OCI-LY7 (cell line): ENCODE measurements at regions of chr12 and their contacts with region 1.

Region 1: DNA sequence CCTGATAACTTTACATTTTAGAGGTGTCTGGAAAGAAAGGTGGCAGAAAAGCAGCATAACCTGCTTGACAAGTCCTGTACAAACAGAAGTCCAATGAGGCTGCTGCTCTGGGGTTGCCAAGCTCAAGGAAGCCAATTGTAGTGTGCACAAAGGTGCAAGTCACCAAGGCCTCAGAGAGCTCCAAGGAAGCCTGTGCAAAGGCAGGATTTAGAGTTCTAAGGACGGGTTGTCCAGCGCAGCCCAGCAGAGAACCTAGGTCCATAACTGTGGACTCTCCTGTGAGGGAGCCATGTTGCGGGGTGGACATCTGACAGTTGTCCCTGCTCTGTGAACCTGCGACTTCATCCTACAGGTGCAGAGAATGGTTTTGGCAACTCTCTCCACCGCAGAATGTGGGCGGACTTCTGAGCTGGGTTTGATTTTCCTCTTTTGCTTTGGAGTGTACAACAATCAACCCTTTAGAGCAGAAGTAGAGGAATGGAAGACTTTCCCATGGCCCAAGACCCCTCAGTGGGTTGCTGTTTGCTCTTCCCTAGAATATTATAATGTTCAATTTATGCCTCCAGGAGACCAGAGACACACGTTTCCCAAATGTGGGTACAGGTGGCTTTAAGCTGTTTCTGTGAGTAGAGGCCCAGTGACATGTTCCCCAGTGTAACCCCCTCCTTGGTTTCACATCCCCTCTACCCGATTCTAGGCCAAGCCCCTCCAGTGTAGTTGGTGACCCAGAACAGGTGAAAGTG is 81.0 kb downstream of the ETV6 start:
- DNase-seq: peak; percentile 93
- H3K4me3 ChIP-seq: peak overlapping the region; percentile 62
- H3K27ac ChIP-seq: peak overlapping the region; percentile 91
- H3K4me1 ChIP-seq: peaks cover 99% of the 10 kb centered on the region
- CTCF ChIP-seq: no peak

Region 2: GRCh38 chr12:11508699-11509098 is 221.8 kb before region 1 on chr12:
- CTCF ChIA-PET with region 1: no interaction called
- POLR2A ChIA-PET with region 1: no interaction called
- intact Hi-C with region 1: no loop called
- DNase-seq: no peak
- H3K4me3 ChIP-seq: no peak overlapping the region
- H3K27ac ChIP-seq: no peak overlapping the region
- H3K4me1 ChIP-seq: no peaks in the 10 kb centered on the region
- CTCF ChIP-seq: no peak

Region 3: GRCh38 chr12:11746024-11746771 is 15.7 kb after region 1 on chr12:
- CTCF ChIA-PET with region 1: interaction called, 16 read pairs
- POLR2A ChIA-PET with region 1: interaction called, 201 read pairs
- intact Hi-C with region 1: loop called (anchors 1 kb)
- DNase-seq: peak; percentile 51
- H3K4me3 ChIP-seq: no peak overlapping the region
- H3K27ac ChIP-seq: peak overlapping the region; percentile 100
- H3K4me1 ChIP-seq: peaks cover 100% of the 10 kb centered on the region
- CTCF ChIP-seq: no peak

Region 4: GRCh38 chr12:11758510-11759493 is 28.3 kb after region 1 on chr12:
- CTCF ChIA-PET with region 1: interaction called, 6 read pairs
- POLR2A ChIA-PET with region 1: interaction called, 201 read pairs
- intact Hi-C with region 1: no loop called
- DNase-seq: peak; percentile 82
- H3K4me3 ChIP-seq: peak overlapping the region; percentile 49
- H3K27ac ChIP-seq: peak overlapping the region; percentile 100
- H3K4me1 ChIP-seq: peaks cover 100% of the 10 kb centered on the region
- CTCF ChIP-seq: no peak

Region 5: DNA sequence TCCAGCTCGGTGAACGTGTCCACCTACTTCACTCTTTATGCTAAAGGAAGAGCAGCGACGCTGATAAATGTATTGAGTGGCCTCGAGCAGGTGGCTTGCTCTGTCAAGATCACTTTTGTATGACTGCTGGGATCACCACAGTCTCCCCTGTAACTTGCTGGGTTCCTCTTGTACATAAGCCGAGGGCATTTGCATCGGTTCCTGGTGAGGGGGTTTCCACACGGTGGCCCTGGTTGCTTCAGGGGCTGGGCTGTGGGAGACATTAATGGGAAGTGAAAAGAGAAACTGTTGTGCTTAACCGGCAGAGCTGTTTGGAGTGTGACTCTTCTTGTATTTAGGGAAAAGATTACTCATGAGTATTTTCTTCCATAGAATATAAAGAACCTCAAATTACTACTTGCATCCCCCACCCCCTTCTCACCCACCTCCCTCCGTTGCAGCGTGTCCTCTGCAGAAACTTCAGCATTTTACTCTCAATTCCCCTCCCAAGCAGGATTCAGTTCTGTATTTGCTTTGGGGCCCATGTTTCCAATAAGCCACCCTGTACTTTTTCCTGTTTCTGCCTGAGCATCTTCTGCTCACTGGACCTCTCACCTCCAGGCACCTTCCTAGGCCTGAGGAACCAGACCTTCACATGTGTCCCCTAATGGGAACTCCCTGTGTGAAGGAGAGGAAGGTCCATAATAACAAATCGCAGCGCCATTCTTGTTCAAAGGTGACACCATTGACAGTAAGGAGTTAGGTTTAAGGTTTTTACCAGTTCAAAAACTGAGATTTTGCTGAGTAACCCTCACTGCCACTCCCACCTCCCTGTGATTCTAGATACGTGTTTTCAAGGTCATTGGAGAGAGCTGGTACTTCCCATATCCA is 106.0 kb after region 1 on chr12:
- CTCF ChIA-PET with region 1: no interaction called
- POLR2A ChIA-PET with region 1: interaction called, 7 read pairs
- intact Hi-C with region 1: loop called (anchors 2 kb)
- DNase-seq: peak; percentile 95
- H3K4me3 ChIP-seq: peak overlapping the region; percentile 37
- H3K27ac ChIP-seq: peak overlapping the region; percentile 91
- H3K4me1 ChIP-seq: peaks cover 72% of the 10 kb centered on the region
- CTCF ChIP-seq: 0 out of 2 replicates have a peak, but pooled peaks have one; percentile 8

Region 6: DNA sequence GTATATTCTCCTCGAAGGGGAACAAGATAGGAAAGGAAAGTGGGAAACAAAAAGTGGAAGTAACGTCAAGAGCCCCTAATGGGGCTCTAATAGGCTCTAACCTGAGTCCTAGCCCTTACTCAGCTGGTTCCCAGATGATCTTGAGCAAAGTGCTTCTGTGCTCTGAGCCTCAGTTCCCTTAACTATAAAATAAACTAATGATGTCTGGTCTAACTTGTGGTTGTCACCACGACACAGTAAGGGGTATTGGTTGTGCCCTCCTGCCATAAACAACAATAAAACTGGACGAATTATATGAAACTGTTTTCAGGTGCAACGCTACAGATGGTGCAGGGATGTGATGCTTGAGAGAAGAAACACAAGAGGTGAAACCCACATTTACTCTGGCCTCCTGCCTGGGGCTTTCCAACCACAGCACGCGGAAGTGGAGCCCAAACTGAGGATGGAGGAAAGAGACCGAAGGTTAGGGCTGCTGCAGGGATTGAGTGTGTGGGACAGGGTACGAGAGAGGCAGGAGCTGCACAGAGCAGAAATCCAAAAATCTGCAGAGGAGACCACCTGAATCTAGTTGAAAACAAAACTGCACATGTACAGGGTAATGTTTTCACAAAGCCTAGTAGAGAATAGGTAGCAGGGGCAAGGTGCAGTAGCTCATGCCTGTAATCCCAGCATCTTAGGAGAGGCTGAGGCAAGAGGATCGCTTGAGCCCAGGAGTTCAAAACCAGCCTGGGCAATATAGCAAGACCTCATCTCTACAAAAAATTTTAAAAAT is 294.6 kb after region 1 on chr12:
- CTCF ChIA-PET with region 1: no interaction called
- POLR2A ChIA-PET with region 1: interaction called, 3 read pairs
- intact Hi-C with region 1: loop called (anchors 2 kb)
- DNase-seq: peak; percentile 91
- H3K4me3 ChIP-seq: peak overlapping the region; percentile 58
- H3K27ac ChIP-seq: peak overlapping the region; percentile 94
- H3K4me1 ChIP-seq: peaks cover 80% of the 10 kb centered on the region
- CTCF ChIP-seq: no peak